Activated CD4-positive, alpha-beta memory T cell treated with anti-CD3 and anti-CD28 coated beads for 36 hours (primary cell): ENCODE measurements at regions of chr17 and their contacts with region 1.

Region 1: DNA sequence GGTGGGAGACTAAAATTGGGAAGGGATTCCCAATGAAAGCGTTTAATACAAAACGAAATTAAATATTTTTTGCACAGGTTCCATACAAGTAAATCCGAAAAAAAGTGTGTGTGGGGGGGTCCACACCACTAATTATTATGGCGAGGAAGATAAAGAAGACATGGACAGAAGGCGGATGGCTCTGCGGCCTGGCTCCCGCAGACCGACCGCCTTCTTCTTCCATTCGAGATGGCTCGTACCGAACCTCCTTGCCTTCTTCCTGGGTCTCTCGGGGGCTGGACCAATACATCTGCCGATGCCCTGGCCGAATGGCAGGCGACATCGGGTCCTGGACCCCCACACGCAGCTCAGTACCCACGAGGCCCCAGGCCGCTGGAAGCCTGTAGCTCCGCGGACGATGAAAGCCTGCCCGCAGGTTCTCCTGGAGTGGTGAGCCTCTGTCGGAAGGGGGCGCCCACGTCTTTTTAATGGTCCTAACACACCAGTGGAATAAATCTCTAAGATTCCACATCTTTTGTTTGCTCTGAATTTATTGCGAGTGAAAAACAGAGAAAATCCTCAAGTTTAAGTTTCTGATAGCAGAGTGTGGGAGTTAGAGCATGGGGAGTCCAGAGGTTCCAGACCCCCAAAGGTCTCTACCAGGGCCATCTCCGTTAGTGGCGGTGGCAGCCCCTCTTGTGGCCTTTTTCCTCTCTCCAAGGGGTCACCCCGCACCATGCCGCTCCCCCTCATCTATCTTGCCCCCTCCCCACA is 1.4 kb downstream of the PRAC2 start:
- DNase-seq: peak; percentile 87
- H3K4me3 Mint-ChIP-seq: no peak overlapping the region
- H3K27ac Mint-ChIP-seq: no peak overlapping the region
- H3K4me1 Mint-ChIP-seq: peaks cover 36% of the 10 kb centered on the region
- H3K27me3 Mint-ChIP-seq: peaks cover 90% of the 10 kb centered on the region

Region 2: DNA sequence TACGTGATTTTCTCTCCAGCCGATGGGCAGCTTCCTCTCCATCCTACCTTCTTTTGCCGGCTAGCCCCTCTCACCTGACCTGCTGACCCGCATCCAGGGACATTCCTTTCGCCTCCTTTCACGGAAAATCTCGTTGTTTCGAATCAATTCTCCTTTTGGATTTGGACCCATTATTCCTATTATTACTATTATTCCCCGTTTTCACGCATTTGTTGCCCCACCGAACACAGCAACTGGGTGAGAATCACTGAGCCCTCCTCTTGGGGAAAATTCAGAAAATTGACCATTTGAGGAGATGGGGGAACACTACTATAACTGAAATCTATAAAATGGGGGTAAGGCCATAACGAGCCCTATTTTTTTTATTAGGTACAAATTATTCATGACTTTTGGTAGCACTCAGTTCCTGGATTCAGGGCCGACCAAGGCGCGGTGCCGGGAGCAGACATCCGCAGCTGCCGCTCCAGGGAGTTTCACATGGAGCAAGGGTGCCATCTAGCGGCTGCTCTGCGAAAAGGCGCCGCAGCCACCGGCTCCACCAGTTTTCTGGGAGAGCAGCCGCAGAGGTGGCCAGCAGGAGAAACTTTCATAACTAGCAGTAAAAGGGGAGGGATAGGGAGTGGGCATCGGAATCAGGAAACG is 106.0 kb before region 1 on chr17:
- CTCF ChIA-PET with region 1: interaction called, 6 read pairs
- POLR2A ChIA-PET with region 1: no interaction called
- intact Hi-C with region 1: loop called (anchors 5 kb)
- DNase-seq: peak; percentile 89
- H3K4me3 Mint-ChIP-seq: peak overlapping the region; percentile 17
- H3K27ac Mint-ChIP-seq: peak overlapping the region; percentile 40
- H3K4me1 Mint-ChIP-seq: peaks cover 42% of the 10 kb centered on the region
- H3K27me3 Mint-ChIP-seq: peaks cover 89% of the 10 kb centered on the region

Region 3: DNA sequence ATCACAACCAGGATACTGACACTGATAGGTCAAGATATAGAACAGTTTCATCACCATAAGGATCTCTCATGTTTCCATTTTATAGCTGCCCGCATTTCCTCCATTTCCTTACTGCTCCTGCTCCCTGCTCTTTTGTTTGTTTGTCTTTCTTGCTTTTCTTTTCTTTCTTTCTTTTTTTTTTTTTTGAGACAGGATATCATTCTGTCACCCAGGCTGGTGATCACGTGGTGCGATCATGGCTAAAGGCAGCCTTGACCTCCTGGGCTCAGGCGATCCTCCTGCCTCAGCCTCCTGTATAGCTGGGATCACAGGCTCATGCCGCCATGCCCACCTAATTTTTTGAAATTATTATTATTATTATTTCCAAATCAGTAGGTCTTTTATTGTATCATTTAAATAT is 33.8 kb before region 1 on chr17:
- CTCF ChIA-PET with region 1: no interaction called
- POLR2A ChIA-PET with region 1: no interaction called
- intact Hi-C with region 1: no loop called
- DNase-seq: no peak
- H3K4me3 Mint-ChIP-seq: no peak overlapping the region
- H3K27ac Mint-ChIP-seq: no peak overlapping the region
- H3K4me1 Mint-ChIP-seq: no peaks in the 10 kb centered on the region
- H3K27me3 Mint-ChIP-seq: peaks cover 7% of the 10 kb centered on the region

Region 4: DNA sequence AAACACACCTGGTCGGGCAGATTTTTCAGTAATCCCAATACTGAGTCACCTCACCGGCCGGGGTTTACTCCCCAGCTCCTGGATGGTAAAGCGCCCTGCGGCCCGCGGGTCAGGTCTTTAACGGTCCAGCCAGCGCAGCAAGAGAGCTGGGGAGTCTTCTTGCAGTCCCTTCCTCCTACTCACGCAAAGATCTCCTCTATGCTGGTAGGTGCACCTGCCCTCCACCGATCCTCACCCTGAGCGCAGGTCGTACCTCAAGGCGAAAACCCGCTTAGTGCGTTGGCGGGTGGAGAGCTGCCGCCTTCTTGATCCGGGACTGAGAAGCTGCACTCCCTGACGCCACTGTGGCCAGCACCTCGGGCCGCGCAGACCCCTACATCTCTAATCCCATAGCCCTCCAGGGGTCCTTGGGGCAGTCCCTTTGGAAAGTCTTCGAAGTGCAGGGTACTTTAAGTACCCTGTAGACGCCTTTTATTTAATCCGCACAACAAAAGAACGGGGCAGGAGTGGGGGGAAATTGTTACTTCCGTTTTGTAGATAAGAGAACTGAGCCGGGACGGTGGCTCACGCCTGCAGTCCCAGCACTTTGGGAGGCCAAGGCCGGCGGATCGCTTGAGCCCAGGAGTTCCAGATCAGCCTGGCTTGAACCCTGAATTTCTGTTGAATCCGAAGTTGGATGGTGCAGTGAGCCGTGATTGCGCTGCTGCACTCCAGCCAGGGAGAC is 14.5 kb after region 1 on chr17:
- CTCF ChIA-PET with region 1: interaction called, 34 read pairs
- POLR2A ChIA-PET with region 1: no interaction called
- intact Hi-C with region 1: no loop called
- DNase-seq: no peak
- H3K4me3 Mint-ChIP-seq: peak overlapping the region; percentile 29
- H3K27ac Mint-ChIP-seq: no peak overlapping the region
- H3K4me1 Mint-ChIP-seq: peaks cover 8% of the 10 kb centered on the region
- H3K27me3 Mint-ChIP-seq: peaks cover 89% of the 10 kb centered on the region

Region 5: DNA sequence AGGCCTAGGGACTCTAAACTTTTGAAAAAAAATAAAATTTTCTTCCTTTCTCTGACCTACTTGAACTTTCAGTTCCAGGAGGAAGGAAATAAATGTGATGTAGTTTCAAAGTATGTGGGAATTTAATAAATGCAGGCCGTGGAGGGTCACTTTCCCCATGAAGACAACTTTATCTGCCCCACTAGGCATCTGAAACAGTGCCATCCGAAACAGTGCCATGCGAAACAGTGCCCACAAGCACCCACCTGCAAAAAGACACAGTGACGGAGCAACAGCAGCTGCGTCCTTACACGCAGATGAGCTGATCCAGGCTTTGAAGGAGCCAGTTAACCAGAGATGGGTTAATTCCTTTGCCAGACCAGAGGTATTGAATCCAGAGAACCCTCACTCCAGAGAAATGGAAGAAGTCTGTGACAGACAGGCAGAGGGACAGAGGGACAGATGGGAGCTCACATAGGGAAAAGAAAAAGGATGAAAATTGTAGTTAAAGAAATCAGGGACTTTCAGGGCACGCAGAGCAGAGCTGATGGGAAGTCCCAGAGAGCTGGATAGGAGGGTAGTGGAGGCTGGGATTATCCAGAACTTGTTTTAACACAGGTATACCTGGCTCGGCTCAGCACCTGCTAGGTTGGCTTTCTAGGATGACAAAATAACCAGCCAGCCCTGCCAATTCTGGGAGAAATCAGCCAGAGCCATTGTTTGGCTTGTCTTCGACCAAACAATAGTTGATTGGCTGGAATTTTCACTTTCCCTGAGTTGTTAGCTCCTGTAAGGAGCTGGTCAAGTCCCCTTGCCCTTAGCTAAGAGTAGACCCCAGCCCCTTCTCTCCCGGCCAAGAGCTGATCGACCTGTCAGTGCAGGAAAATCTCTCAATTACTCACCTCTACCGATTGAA is 21.2 kb after region 1 on chr17:
- CTCF ChIA-PET with region 1: interaction called, 34 read pairs
- POLR2A ChIA-PET with region 1: interaction called, 3 read pairs
- intact Hi-C with region 1: no loop called
- DNase-seq: no peak
- H3K4me3 Mint-ChIP-seq: no peak overlapping the region
- H3K27ac Mint-ChIP-seq: no peak overlapping the region
- H3K4me1 Mint-ChIP-seq: peaks cover 2% of the 10 kb centered on the region
- H3K27me3 Mint-ChIP-seq: peaks cover 75% of the 10 kb centered on the region

Region 6: GRCh38 chr17:48753794-48754499 is 29.5 kb after region 1 on chr17:
- CTCF ChIA-PET with region 1: interaction called, 19 read pairs
- POLR2A ChIA-PET with region 1: interaction called, 3 read pairs
- intact Hi-C with region 1: loop called (anchors 2 kb)
- DNase-seq: no peak
- H3K4me3 Mint-ChIP-seq: no peak overlapping the region
- H3K27ac Mint-ChIP-seq: peak overlapping the region; percentile 18
- H3K4me1 Mint-ChIP-seq: peaks cover 13% of the 10 kb centered on the region
- H3K27me3 Mint-ChIP-seq: peaks cover 87% of the 10 kb centered on the region

Region 7: GRCh38 chr17:48791128-48792032 is 67.0 kb after region 1 on chr17:
- CTCF ChIA-PET with region 1: interaction called, 21 read pairs
- POLR2A ChIA-PET with region 1: no interaction called
- intact Hi-C with region 1: loop called (anchors 10 kb)
- DNase-seq: peak; percentile 43
- H3K4me3 Mint-ChIP-seq: no peak overlapping the region
- H3K27ac Mint-ChIP-seq: no peak overlapping the region
- H3K4me1 Mint-ChIP-seq: peaks cover 5% of the 10 kb centered on the region
- H3K27me3 Mint-ChIP-seq: peaks cover 29% of the 10 kb centered on the region

Region 8: DNA sequence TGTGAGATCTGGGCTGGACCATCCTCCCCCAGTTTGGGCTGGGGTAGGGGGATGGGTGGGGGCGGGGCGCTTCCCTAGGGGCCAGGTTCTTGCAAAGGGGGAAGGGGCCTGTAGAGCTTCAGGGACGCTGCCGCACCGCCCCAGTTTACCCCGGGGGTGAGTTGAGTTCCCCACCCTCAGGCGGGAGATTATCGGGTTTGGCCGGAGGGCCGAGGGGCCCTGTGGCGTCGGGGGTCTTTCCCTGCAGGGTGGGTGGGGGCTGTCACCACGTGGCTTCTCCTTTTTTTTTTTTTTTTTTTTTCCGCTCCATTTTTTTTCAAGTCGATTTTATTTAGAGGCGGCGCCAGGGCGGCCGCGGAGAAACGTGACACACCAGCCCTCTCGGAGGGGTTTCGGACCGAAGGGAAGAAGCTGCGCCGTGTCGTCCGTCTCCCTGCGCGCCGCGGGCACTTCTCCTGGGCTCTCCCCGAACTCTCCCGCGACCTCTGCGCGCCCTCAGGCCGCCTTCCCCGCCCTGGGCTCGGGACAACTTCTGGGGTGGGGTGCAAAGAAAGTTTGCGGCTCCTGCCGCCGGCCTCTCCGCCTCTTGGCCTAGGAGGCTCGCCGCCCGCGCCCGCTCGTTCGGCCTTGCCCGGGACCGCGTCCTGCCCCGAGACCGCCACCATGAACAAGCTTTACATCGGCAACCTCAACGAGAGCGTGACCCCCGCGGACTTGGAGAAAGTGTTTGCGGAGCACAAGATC is 272.8 kb after region 1 on chr17 and contains the start of gene IGF2BP1:
- CTCF ChIA-PET with region 1: no interaction called
- POLR2A ChIA-PET with region 1: no interaction called
- intact Hi-C with region 1: loop called (anchors 10 kb)
- DNase-seq: peak; percentile 34
- H3K4me3 Mint-ChIP-seq: peak within 1 kb of the TSS; percentile 49
- H3K27ac Mint-ChIP-seq: no peak within 1 kb of the TSS
- H3K4me1 Mint-ChIP-seq: peaks cover 30% of the 10 kb centered on the region
- H3K27me3 Mint-ChIP-seq: peaks cover 72% of the 10 kb centered on the region
- total RNA-seq, gene IGF2BP1: 0.22 to 0.29 TPM